H1 (cell line): ENCODE measurements at regions of chr17 and their contacts with region 1.

Region 1: DNA sequence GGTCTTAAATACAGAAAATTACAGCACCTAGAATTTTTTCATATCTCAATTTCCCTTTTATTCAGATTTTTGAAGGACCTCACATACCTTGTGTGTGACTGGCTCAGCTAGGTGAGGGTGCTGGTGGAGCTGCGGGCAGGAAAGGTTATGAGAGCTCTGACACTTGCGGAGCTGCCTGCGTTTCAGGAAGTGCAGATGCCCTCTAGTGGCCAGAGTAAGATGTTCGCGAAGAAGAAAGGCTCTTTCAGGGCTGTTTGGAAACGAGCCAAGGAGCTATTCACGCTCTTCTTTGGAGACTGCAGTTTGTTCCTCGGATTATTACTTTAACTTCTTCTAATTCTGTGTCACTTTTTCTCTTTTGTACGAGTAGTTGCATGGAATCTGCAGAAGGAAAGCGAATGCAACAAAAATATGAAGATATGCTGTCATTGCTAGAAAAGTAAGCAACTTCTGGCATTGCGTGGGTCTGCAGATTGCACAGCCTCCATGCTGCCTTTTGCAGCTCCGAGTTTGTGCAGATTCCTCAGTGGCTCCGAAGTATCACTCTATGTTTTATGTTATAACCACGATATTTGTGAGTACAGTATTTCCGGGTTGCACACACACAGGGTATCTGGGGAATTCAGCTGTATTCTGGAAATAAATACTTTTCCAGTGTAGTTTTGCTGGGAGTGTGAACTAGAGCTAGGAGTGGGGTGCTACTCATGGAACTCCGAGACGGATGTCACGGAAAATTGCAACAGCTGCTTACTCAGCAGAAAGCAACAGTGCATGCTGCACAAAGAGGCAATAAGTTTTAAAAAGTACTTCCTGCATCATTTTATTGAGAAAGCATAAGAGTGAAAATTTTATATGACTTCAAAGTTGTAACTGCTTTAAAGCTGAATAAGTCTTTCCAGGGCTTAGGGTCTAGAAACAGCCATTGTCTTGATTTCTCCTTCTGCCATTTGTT is 46.3 kb downstream of the DNAH9 start:
- DNase-seq: peak; percentile 25 to 61
- H3K4me3 ChIP-seq: no peak overlapping the region
- H3K27ac ChIP-seq: no peak overlapping the region
- H3K4me1 ChIP-seq: no peaks in the 10 kb centered on the region
- H3K27me3 ChIP-seq: no peaks in the 10 kb centered on the region
- CTCF ChIP-seq: peak; percentile 67 to 93 (median 86)
- EP300 ChIP-seq: no peak
- POLR2A ChIP-seq: no peak
- RAD21 ChIP-seq: peak; percentile 82 to 87

Region 2: DNA sequence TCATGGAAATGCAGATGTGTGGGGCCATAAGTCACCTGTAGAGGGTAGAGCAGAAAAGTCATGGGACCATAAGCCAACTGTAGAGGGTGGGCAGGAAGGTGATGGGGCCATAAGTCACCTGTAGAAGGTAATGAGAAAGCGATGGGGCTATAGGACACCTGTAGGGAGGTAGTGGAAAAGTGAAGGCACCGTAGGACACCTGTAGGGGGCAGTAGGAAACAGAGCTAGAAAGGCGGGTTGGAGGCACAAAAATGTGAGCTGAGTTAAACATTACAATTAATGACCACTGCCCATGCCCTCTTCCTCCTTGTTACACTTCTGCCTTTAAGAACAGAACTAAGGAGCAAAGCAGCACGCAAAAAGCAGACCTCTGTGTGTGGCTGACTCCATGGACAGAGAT is 253.4 kb before region 1 on chr17:
- CTCF ChIA-PET with region 1: interaction called, 34 read pairs
- POLR2A ChIA-PET with region 1: no interaction called
- DNase-seq: peak in 1 of 2 experiments; percentile 73
- H3K4me3 ChIP-seq: no peak overlapping the region
- H3K27ac ChIP-seq: no peak overlapping the region
- H3K4me1 ChIP-seq: peaks cover 0 to 3% (median 0%) of the 10 kb centered on the region in 4 experiments; a peak in 1 of 7 replicates
- H3K27me3 ChIP-seq: no peaks in the 10 kb centered on the region
- CTCF ChIP-seq: peak; percentile 63 to 88 (median 81)
- EP300 ChIP-seq: no peak
- POLR2A ChIP-seq: no peak
- RAD21 ChIP-seq: peak; percentile 82 to 88

Region 3: DNA sequence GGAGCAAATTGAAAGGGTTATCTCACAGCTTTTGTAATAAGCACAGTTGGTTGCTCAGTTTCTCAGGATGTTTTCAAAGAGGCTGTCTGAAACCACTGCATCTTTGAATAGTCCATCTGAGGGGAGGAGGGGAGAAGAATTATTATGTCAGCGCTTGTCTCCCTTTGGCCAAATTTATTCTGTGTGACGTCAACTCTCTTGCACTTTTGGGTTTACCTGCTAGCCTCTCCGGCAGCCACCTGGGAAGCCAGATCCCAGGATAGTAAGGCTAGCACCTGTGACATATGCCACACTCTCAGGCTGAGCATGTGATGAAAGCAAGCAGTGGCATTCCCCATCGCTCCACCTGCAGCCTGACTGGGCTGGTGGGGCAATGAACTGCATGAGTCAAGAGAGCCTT is 222.7 kb before region 1 on chr17:
- CTCF ChIA-PET with region 1: no interaction called
- POLR2A ChIA-PET with region 1: no interaction called
- DNase-seq: no peak
- H3K4me3 ChIP-seq: no peak overlapping the region
- H3K27ac ChIP-seq: no peak overlapping the region
- H3K4me1 ChIP-seq: no peaks in the 10 kb centered on the region
- H3K27me3 ChIP-seq: no peaks in the 10 kb centered on the region
- CTCF ChIP-seq: no peak
- EP300 ChIP-seq: no peak
- POLR2A ChIP-seq: no peak
- RAD21 ChIP-seq: no peak

Region 4: GRCh38 chr17:11583306-11583992 is 61.1 kb before region 1 on chr17:
- CTCF ChIA-PET with region 1: interaction called, 21 read pairs
- POLR2A ChIA-PET with region 1: no interaction called
- DNase-seq: no peak
- H3K4me3 ChIP-seq: no peak overlapping the region
- H3K27ac ChIP-seq: no peak overlapping the region
- H3K4me1 ChIP-seq: no peaks in the 10 kb centered on the region
- H3K27me3 ChIP-seq: no peaks in the 10 kb centered on the region
- CTCF ChIP-seq: peak in 1 of 3 experiments; percentile 6; a peak in 1 of 4 replicates
- EP300 ChIP-seq: no peak
- POLR2A ChIP-seq: no peak
- RAD21 ChIP-seq: no peak

Region 5: DNA sequence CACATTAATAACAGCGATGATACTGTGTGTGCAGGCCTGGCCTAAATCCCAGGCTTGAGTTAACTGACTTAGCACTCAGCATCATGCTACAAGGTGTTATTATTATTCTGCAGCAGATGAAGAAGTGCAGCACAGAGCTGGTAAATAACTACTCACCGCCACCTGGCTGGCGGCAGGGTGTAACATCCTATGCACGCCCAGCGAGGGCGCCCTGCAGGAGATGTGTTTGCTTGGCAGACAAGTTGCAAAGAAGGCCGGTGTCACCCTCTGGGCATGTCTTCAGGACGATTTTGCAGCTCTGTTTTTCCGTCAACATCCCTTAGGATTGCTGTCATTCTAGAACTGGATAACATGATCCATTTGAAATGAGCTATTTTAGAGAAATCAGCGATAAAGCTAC is 16.2 kb before region 1 on chr17:
- CTCF ChIA-PET with region 1: interaction called, 17 read pairs
- POLR2A ChIA-PET with region 1: no interaction called
- DNase-seq: no peak
- H3K4me3 ChIP-seq: no peak overlapping the region
- H3K27ac ChIP-seq: no peak overlapping the region
- H3K4me1 ChIP-seq: no peaks in the 10 kb centered on the region
- H3K27me3 ChIP-seq: no peaks in the 10 kb centered on the region
- CTCF ChIP-seq: peak; percentile 6 to 17 (median 13); a peak in 3 of 4 replicates
- EP300 ChIP-seq: no peak
- POLR2A ChIP-seq: no peak
- RAD21 ChIP-seq: peak; percentile 23 to 37; a peak in 3 of 4 replicates

Region 6: DNA sequence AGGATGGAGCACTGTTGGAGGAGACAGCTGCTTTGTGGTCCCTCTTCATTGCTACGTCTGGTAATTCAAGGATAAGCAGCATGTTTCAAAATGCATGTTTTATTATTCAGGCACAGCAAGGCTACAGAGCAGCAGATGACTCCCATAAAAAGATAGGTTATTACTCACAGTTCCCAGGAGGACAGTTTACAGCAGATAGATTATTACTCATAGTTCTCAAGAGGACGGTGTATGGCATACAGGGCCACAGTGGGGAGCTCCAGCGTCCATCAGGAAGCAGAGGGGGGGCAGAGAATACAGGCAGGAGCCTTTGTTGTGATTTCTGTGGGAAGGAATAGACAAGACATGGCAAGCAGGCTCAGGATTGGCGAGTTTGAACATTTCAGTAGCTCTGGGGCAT is 26.6 kb after region 1 on chr17:
- CTCF ChIA-PET with region 1: no interaction called
- POLR2A ChIA-PET with region 1: no interaction called
- DNase-seq: no peak
- H3K4me3 ChIP-seq: no peak overlapping the region
- H3K27ac ChIP-seq: no peak overlapping the region
- H3K4me1 ChIP-seq: peaks cover 0 to 12% (median 4%) of the 10 kb centered on the region in 4 experiments; a peak in 4 of 7 replicates
- H3K27me3 ChIP-seq: no peaks in the 10 kb centered on the region; a peak in 1 of 7 replicates
- CTCF ChIP-seq: no peak
- EP300 ChIP-seq: no peak
- POLR2A ChIP-seq: no peak
- RAD21 ChIP-seq: no peak

Region 7: GRCh38 chr17:11742886-11743285 is 98.3 kb after region 1 on chr17:
- CTCF ChIA-PET with region 1: interaction called, 12 read pairs
- POLR2A ChIA-PET with region 1: no interaction called
- DNase-seq: no peak
- H3K4me3 ChIP-seq: no peak overlapping the region
- H3K27ac ChIP-seq: no peak overlapping the region
- H3K4me1 ChIP-seq: no peaks in the 10 kb centered on the region
- H3K27me3 ChIP-seq: no peaks in the 10 kb centered on the region
- CTCF ChIP-seq: peak in 2 of 3 experiments; percentile 58 to 71; a peak in 3 of 4 replicates
- EP300 ChIP-seq: no peak
- POLR2A ChIP-seq: no peak
- RAD21 ChIP-seq: peak; percentile 81 to 83